AG04449 (cell line): ENCODE measurements at regions of chr12 and their contacts with region 1.

Region 1: GRCh38 chr12:52327052-52327829 is 6.0 kb upstream of the KRT83 start:
- DNase-seq: peak; percentile 55
- H3K4me3 ChIP-seq: no peak overlapping the region
- CTCF ChIP-seq: peak; percentile 98

Region 2: GRCh38 chr12:52221912-52222457 is 105.3 kb before region 1 on chr12:
- CTCF ChIA-PET with region 1: interaction called, 30 read pairs
- POLR2A ChIA-PET with region 1: no interaction called
- DNase-seq: no peak
- H3K4me3 ChIP-seq: no peak overlapping the region
- CTCF ChIP-seq: peak; percentile 46

Region 3: DNA sequence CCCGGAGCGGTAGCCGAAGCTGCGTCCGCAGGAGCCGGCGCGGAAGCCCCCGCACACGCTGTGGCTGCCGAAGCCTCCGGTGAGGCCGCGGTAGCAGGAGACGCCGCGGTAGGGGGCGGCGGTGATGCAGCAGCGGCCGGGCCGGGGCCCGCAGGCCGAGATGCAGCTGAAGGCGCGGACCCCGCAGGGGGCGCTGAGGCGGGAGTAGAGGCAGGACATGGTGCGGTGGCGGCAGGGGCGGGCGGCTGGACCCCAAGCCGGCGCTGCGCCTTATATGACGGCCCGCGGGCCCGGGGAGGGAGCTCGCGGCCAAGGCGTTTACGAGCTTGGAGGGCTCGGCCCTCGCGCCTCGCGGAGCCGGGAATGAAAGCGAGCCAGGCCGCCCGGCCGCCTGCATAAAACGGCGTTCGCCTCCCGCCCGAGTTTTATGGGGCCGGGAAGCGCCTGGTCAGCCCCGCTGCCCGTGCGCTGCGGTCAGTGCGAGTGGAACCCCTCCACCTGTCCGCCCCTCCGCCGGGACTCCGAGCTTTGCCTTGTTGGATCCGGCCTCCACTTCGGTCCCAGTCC is 68.8 kb before region 1 on chr12:
- CTCF ChIA-PET with region 1: interaction called, 23 read pairs
- POLR2A ChIA-PET with region 1: no interaction called
- DNase-seq: no peak
- H3K4me3 ChIP-seq: peak overlapping the region; percentile 8; the same call in 1 of the 2 replicates
- CTCF ChIP-seq: no peak

Region 4: DNA sequence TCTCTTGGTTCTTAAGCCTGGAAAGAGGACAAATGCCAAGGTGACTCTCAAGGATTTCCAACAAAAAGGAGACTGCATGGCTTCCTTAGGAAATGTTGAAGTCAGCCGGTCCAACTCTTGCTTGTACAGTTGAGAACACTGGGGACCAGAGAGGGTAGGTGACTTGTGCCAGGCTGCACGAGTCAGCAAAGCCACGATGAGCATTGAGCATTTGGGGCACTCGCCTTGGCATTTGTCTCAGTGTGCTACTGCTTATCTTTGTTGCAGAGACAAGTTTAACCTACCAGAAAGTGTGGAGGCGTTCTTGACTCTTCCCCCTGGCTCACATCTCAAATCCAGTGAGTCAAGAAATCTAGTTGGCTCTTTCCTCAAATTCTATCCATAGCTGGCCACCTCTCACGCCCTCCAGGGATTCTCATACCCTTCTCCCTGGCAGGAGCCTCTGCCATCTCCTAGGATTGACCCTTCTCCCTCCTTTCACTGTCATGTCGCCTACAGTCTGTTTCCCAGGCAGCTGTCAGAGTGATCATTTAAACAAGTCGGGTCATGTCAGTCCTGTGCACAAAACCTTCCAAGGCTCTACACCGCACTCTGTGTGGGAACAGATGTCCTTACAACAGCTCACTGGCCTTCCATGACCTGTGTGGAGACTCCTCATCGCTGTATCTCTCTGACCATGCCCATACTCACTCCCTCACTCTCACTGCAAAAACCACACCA is 11.2 kb after region 1 on chr12:
- CTCF ChIA-PET with region 1: interaction called, 57 read pairs
- POLR2A ChIA-PET with region 1: no interaction called
- DNase-seq: no peak
- H3K4me3 ChIP-seq: no peak overlapping the region
- CTCF ChIP-seq: no peak

Region 5: GRCh38 chr12:52358575-52359350 is 31.5 kb after region 1 on chr12:
- CTCF ChIA-PET with region 1: interaction called, 20 read pairs
- POLR2A ChIA-PET with region 1: no interaction called
- DNase-seq: no peak
- H3K4me3 ChIP-seq: no peak overlapping the region
- CTCF ChIP-seq: no peak